CD8-positive, alpha-beta T cell (primary cell): ENCODE measurements at regions of chr3 and their contacts with region 1.

Region 1: GRCh38 chr3:183385698-183386613 is 42.5 kb downstream of the MCF2L2 start:
- DNase-seq: peak; percentile 18 to 77 (median 63)
- ATAC-seq: peak; percentile 87
- H3K4me3 ChIP-seq: no peak overlapping the region
- H3K4me3 Mint-ChIP-seq: no peak overlapping the region
- H3K27ac ChIP-seq: no peak overlapping the region
- H3K27ac Mint-ChIP-seq: no peak overlapping the region
- H3K4me1 ChIP-seq: no peaks in the 10 kb centered on the region
- H3K4me1 Mint-ChIP-seq: peaks cover 2% of the 10 kb centered on the region
- H3K27me3 ChIP-seq: no peaks in the 10 kb centered on the region
- H3K27me3 Mint-ChIP-seq: no peaks in the 10 kb centered on the region
- CTCF ChIP-seq: peak; percentile 76

Region 2: DNA sequence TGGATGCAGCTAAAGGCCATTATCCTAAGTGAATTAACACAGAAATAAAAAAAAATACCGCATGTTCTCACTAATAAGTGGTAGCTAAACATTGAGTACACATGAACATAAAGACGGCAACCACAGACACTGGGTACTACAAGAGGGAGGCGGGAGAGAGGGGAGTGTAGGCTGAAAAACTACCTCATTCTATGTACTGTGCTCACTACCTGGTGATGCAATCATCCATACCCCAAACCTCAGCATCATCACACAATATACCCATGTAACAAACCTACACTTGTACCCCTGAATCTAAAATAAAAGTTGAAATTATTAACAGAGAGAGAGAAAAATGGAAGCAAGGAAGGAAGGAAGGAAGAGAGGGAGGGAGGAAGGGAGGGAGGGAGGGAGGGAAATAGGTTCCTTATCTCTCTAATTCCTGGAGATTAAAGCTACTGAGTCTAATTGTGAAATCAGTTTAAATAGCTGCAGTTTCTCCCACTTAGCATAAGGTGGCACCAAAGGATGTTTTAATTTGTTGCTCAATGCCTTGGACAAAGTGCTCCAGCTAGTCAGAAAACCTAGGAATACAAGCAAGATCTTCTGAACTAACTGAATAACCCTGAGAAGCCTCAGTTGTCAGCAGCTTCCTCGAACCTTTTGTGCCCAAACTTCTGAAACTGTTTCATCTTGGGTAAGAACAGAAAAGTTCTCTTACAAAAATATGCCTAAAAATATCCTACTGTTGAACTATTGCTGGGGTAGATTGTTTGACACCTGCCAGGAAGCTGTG is 672.0 kb before region 1 on chr3:
- CTCF ChIA-PET with region 1: no interaction called
- POLR2A ChIA-PET with region 1: no interaction called
- intact Hi-C with region 1: loop called in 1 of 2 experiments (anchors 5 kb)
- DNase-seq: peak in 2 of 9 experiments; percentile 47 to 61
- ATAC-seq: peak; percentile 48
- H3K4me3 ChIP-seq: no peak overlapping the region
- H3K4me3 Mint-ChIP-seq: no peak overlapping the region
- H3K27ac ChIP-seq: no peak overlapping the region
- H3K27ac Mint-ChIP-seq: no peak overlapping the region
- H3K4me1 ChIP-seq: no peaks in the 10 kb centered on the region
- H3K4me1 Mint-ChIP-seq: peaks cover 6% of the 10 kb centered on the region
- H3K27me3 ChIP-seq: no peaks in the 10 kb centered on the region
- H3K27me3 Mint-ChIP-seq: peaks cover 6% of the 10 kb centered on the region
- CTCF ChIP-seq: peak; percentile 76

Region 3: GRCh38 chr3:183116025-183116614 is 269.8 kb before region 1 on chr3:
- CTCF ChIA-PET with region 1: interaction called, 156 read pairs
- POLR2A ChIA-PET with region 1: no interaction called
- intact Hi-C with region 1: no loop called
- DNase-seq: peak; percentile 7 to 75 (median 52)
- ATAC-seq: peak; percentile 84
- H3K4me3 ChIP-seq: peak overlapping the region; percentile 26 to 37
- H3K4me3 Mint-ChIP-seq: peak overlapping the region; percentile 75
- H3K27ac ChIP-seq: no peak overlapping the region
- H3K27ac Mint-ChIP-seq: no peak overlapping the region
- H3K4me1 ChIP-seq: peaks cover 6% of the 10 kb centered on the region
- H3K4me1 Mint-ChIP-seq: peaks cover 9% of the 10 kb centered on the region
- H3K27me3 ChIP-seq: no peaks in the 10 kb centered on the region
- H3K27me3 Mint-ChIP-seq: peaks cover 10% of the 10 kb centered on the region
- CTCF ChIP-seq: no peak

Region 4: DNA sequence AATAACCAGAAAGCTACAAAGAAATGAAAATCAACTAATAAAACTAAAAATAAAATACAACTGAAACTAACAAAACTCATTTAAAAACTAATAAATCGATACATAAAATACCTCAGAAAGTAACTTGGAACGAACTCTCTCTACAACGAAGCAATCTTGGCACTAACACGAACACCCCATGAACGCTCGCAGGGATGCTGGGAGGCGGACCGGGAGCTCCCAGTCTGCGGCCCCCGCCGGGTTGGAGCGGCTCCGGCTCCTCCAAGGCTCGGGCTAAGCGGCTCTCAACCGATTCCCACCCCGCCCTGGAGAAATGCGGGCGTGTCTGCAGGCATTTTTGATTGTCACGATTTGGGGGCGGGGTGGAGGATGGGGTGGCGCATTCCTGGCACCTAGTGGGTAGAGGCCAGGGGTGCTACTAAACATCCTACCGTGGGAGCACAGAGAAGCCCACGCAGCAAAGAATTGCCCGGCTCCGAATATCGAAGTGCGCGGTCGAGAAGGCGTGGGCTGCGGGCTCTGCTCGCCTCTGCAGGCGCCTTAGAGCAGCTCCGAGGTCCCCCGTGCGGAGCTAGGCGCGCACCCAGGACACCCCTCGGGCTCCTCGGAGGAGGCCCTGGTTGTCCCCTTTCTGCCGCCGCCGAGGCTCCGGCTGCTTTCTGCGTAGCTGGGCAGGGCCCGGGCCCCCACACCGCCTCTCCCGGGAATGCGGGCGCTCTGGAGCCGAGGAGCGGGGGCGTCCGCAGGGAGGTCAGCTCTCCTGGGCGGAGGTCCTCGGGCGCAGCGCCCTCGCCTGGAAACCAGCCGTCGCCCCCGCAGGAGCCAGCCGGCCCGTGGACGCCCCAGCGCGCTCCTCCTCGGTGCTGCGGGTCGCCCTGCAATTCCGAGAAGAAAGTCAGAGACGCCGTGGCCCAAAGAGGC is 207.1 kb before region 1 on chr3:
- CTCF ChIA-PET with region 1: interaction called, 188 read pairs
- POLR2A ChIA-PET with region 1: no interaction called
- intact Hi-C with region 1: loop called in 1 of 2 experiments (anchors 1 kb)
- DNase-seq: peak in 6 of 9 experiments; percentile 32 to 56 (median 44)
- ATAC-seq: peak; percentile 69
- H3K4me3 ChIP-seq: peak overlapping the region; percentile 43 to 54
- H3K4me3 Mint-ChIP-seq: peak overlapping the region; percentile 71
- H3K27ac ChIP-seq: no peak overlapping the region
- H3K27ac Mint-ChIP-seq: no peak overlapping the region
- H3K4me1 ChIP-seq: peaks cover 4% of the 10 kb centered on the region
- H3K4me1 Mint-ChIP-seq: peaks cover 8% of the 10 kb centered on the region
- H3K27me3 ChIP-seq: peaks cover 11 to 13% of the 10 kb centered on the region in 2 experiments
- H3K27me3 Mint-ChIP-seq: peaks cover 29% of the 10 kb centered on the region
- CTCF ChIP-seq: no peak

Region 5: DNA sequence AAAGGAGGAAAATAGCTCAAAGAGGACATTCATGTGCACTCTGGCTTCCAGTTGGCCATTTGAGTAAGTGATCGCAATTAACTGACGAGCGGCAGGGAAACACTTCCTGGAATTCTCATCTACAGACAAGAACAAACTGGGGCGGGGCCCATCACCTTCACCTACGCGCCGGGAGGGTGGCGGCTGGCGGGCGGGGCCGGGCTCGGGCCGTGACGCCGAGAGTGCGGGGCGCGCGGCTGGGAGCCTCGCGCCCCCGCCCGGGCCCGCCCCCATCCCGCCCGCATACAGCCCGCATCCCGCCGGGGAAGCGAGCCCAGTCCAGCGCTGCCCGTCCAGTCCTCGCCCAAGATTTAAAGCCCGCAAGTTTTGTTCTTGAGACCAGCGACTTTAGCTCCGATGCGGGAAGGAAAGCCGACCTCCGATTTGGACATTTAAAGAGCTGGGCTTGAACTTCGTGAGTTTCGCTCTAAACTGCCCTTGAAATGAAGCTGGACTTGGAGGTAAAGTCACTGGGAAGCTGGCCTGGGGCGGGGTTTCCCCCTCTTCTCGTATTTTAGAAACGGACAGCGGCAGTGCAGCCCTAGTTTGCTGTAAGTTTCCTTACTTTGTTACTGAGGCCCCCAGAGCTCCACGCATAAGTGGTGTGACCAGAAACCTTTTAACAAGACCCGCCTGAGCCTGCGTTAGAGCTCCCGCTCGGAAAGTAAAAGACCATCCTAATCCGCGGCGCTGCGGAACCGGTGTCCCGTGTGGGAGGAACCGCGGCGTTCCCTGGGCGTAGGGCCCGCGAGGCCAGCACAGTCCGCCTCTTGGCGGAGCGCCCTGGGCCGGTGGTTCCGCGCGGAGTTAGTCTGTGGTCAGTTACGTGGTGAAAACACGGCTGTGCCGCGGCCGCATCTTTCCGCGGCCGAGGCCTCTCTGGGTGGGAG is 132.7 kb before region 1 on chr3 and contains the start of gene B3GNT5:
- CTCF ChIA-PET with region 1: interaction called, 4 read pairs
- POLR2A ChIA-PET with region 1: no interaction called
- intact Hi-C with region 1: loop called in 1 of 2 experiments (anchors 10 kb)
- DNase-seq: peak in 5 of 9 experiments; percentile 26 to 49 (median 30)
- ATAC-seq: peak; percentile 55
- H3K4me3 ChIP-seq: peak within 1 kb of the TSS; percentile 57 to 58
- H3K4me3 Mint-ChIP-seq: peak within 1 kb of the TSS; percentile 75
- H3K27ac ChIP-seq: no peak within 1 kb of the TSS
- H3K27ac Mint-ChIP-seq: no peak within 1 kb of the TSS
- H3K4me1 ChIP-seq: peaks cover 5% of the 10 kb centered on the region
- H3K4me1 Mint-ChIP-seq: peaks cover 8% of the 10 kb centered on the region
- H3K27me3 ChIP-seq: peaks cover 12 to 18% of the 10 kb centered on the region in 2 experiments
- H3K27me3 Mint-ChIP-seq: peaks cover 30% of the 10 kb centered on the region
- CTCF ChIP-seq: no peak
- total RNA-seq, gene B3GNT5: 1.1 to 1.2 TPM

Region 6: GRCh38 chr3:183369117-183369516 is 16.8 kb before region 1 on chr3:
- CTCF ChIA-PET with region 1: interaction called, 16 read pairs
- POLR2A ChIA-PET with region 1: no interaction called
- intact Hi-C with region 1: no loop called
- DNase-seq: no peak
- ATAC-seq: no peak
- H3K4me3 ChIP-seq: no peak overlapping the region
- H3K4me3 Mint-ChIP-seq: no peak overlapping the region
- H3K27ac ChIP-seq: no peak overlapping the region
- H3K27ac Mint-ChIP-seq: no peak overlapping the region
- H3K4me1 ChIP-seq: no peaks in the 10 kb centered on the region
- H3K4me1 Mint-ChIP-seq: peaks cover 7% of the 10 kb centered on the region
- H3K27me3 ChIP-seq: no peaks in the 10 kb centered on the region
- H3K27me3 Mint-ChIP-seq: no peaks in the 10 kb centered on the region
- CTCF ChIP-seq: no peak